ENCODE measurements at regions of chr9 and their contacts with region 1.

Region 1: GRCh38 chr9:35835216-35835632 is 6.2 kb downstream of the TMEM8B start:
- DNase-seq: peak; percentile 69

Region 2: GRCh38 chr9:35801328-35802128 is 33.7 kb before region 1 on chr9:
- intact Hi-C with region 1: no loop called
- DNase-seq: no peak

Region 3: DNA sequence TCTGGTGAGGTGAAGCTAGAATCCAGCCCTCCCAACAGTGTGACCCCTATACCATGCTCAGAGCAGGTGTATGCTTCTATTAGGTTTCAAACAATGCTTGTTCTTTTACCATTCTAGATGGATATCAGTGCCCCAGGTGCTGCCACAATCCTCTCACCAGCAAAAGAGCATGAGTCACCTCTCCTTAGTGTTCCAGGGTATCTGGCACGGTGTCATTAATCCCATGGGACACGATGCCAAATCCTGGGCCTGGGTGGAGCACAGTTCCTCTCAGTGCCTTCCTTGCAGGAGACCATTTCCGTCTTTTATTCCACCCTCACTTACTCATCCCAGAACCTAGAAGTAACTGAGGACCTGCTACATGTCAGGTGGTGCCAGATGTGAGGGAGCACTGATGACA is 36.3 kb after region 1 on chr9:
- intact Hi-C with region 1: loop called (anchors 5 kb)
- DNase-seq: no peak

Measured in cardiac septum (tissue), 1 donor.